Mammary epithelial cell (primary cell): ENCODE measurements at regions of chr20 and their contacts with region 1.

Region 1: GRCh38 chr20:10225439-10226060 is 6.9 kb downstream of the SNAP25 start:
- DNase-seq: no peak
- H3K4me3 ChIP-seq: no peak overlapping the region
- H3K27ac ChIP-seq: no peak overlapping the region
- H3K4me1 ChIP-seq: peaks cover 5% of the 10 kb centered on the region
- H3K27me3 ChIP-seq: no peaks in the 10 kb centered on the region
- CTCF ChIP-seq: peak; percentile 14 to 20

Region 2: DNA sequence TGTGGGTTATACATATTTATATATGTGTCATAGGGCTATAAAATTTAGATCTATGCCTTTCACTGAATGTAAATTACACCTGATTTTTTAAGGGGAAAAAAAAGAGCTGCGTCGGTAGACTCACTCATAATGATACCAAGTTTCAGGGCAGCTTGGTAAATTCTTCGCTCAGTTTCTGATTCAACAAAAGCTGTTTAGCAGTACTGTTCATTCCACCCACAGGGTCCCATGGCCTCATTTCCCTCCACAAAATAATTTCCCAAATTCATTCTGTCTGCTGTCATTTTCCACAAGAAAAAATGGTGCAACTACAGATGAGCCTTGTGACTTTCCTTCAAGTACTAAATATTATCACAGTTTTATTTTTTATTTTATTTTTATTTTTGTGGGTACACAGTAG is 450.4 kb before region 1 on chr20:
- CTCF ChIA-PET with region 1: no interaction called
- dilution Hi-C with region 1: no loop called
- in situ Hi-C with region 1: no loop called
- intact Hi-C with region 1: no loop called
- DNase-seq: no peak
- H3K4me3 ChIP-seq: no peak overlapping the region
- H3K27ac ChIP-seq: no peak overlapping the region
- H3K4me1 ChIP-seq: no peaks in the 10 kb centered on the region
- H3K27me3 ChIP-seq: no peaks in the 10 kb centered on the region
- CTCF ChIP-seq: no peak

Region 3: DNA sequence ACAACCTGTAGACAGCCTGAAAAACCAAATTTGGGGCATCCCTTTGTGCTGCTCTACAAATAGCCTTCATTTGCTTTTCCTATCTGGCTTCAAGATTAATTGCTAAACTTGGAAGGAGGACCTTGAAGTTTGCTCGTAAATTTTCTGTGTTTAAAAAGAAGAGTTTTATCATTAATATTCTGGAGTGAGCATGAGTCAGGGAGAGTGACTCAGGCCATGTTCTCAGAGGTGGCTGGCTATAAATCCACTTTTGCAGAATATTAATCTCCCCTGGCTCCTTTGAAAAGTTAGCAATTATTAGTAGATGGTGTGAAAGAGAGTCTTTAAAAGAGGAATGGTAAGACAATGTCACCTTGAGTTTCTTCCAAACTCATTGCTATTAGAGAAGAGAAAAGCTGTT is 99.8 kb before region 1 on chr20:
- CTCF ChIA-PET with region 1: no interaction called
- dilution Hi-C with region 1: no loop called
- in situ Hi-C with region 1: no loop called
- intact Hi-C with region 1: no loop called
- DNase-seq: no peak
- H3K4me3 ChIP-seq: no peak overlapping the region
- H3K27ac ChIP-seq: no peak overlapping the region
- H3K4me1 ChIP-seq: no peaks in the 10 kb centered on the region
- H3K27me3 ChIP-seq: peaks cover 2% of the 10 kb centered on the region
- CTCF ChIP-seq: no peak

Region 4: GRCh38 chr20:10357974-10358373 is 132.4 kb after region 1 on chr20:
- CTCF ChIA-PET with region 1: no interaction called
- dilution Hi-C with region 1: no loop called
- in situ Hi-C with region 1: no loop called
- intact Hi-C with region 1: loop called (anchors 10 kb)
- DNase-seq: no peak
- H3K4me3 ChIP-seq: no peak overlapping the region
- H3K27ac ChIP-seq: no peak overlapping the region
- H3K4me1 ChIP-seq: no peaks in the 10 kb centered on the region
- H3K27me3 ChIP-seq: no peaks in the 10 kb centered on the region
- CTCF ChIP-seq: peak; percentile 50 to 67

Region 5: DNA sequence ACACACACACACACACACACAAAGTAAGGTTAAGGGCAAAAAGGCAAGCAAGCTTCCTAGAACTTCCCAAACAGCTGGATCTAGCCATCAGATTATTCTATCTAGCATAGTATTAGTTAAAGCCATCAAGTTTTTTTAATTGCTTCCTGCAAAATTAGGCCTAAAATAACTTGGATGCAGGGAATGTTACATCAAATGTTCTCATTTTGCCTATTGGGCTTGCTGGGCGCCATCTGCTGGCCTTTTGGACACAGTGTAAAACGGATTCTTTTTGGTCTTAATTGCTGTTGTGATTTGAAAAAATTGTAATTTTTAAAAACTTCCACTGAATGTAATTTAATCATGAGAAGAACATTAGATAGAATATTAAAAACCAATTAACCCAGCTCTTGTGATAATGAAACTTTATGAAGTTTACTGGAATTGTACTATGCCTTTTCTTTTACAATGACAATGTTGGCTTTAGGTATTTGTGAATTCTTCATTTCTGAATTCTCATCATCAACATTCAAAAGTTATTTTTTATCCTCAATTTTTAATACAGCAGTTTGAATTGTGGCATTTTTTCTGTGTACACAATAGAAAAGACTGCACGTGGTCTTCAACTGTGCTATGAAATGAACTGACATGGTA is 201.6 kb after region 1 on chr20:
- CTCF ChIA-PET with region 1: no interaction called
- dilution Hi-C with region 1: no loop called
- in situ Hi-C with region 1: no loop called
- intact Hi-C with region 1: loop called (anchors 5 kb)
- DNase-seq: peak; percentile 47
- H3K4me3 ChIP-seq: no peak overlapping the region
- H3K27ac ChIP-seq: no peak overlapping the region
- H3K4me1 ChIP-seq: peaks cover 18% of the 10 kb centered on the region
- H3K27me3 ChIP-seq: no peaks in the 10 kb centered on the region
- CTCF ChIP-seq: peak; percentile 79 to 90